ENCODE measurements at regions of chr14 and their contacts with region 1.

Region 1: DNA sequence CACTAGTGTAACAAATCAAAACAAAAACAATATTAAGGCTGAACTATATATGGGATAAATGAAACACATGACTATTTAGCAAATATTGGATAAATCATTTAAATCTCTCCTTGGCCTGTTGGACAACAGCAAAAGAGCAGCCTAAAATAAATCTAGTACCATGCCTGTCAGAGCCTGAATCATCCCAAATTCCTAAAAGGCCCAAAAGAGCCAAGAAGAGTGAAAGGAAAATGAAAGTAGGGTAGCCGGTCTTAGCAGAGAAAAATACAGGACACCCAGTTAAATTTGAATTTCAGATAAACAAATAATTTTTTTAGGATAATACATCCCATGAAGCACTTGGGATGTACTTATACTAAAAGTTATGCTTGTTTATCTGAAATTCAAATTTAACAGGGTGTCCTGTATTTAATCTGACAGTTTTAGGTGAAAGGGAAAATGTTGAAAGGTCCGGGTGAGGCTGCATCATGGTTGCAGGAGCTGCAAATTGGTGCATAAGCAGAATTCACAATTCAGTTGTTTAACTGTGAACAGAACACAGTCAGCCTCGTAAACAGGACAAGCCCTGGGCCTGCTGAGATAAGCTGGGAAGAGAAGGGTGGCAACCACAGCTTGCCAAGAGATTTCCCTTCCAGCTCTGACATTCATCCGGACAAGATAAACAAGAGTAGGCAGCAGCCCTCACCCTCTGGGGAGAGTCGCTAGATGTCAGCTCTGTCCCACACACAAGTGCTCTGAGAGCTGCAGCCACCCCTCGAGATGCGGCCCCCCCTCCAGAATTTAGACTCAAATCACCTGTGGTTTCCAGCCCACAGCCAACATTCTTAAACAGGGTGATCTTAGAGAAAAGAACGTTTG is 30.3 kb downstream of the DMAC2L start:
- DNase-seq: peak; percentile 76
- ATAC-seq: no peak
- H3K4me3 Mint-ChIP-seq: no peak overlapping the region
- H3K27ac Mint-ChIP-seq: no peak overlapping the region
- H3K4me1 Mint-ChIP-seq: peaks cover 30% of the 10 kb centered on the region
- H3K27me3 Mint-ChIP-seq: peaks cover 3% of the 10 kb centered on the region

Region 2: DNA sequence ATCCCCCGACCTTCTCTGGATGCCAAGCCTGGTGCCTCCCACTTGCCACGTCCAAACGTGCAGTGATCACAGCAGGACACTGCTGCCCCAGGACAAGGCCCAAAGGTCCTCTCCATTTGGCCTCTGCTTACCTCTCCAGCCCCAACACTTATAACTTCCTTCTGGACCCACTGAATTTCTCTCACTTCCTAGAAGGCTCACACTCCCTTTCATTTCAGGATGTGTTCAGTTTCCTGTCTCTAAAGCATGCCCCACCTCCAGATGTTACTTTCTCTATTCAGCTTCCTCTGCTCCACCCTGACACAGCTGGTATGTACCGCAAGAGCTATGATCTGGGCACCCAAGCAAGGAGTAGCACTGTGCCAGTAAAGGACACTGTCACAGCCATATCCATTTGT is 21.3 kb after region 1 on chr14:
- CTCF ChIA-PET with region 1: interaction called, 11 read pairs
- POLR2A ChIA-PET with region 1: interaction called, 6 read pairs
- intact Hi-C with region 1: loop called (anchors 1 kb)
- DNase-seq: peak; percentile 66
- ATAC-seq: peak; percentile 96
- H3K4me3 Mint-ChIP-seq: peak overlapping the region; percentile 82
- H3K27ac Mint-ChIP-seq: peak overlapping the region; percentile 94
- H3K4me1 Mint-ChIP-seq: peaks cover 20% of the 10 kb centered on the region
- H3K27me3 Mint-ChIP-seq: no peaks in the 10 kb centered on the region

Region 3: GRCh38 chr14:50396631-50397390 is 54.4 kb after region 1 on chr14 and contains the start of gene CDKL1:
- CTCF ChIA-PET with region 1: no interaction called
- POLR2A ChIA-PET with region 1: interaction called, 5 read pairs
- intact Hi-C with region 1: loop called (anchors 2 kb)
- DNase-seq: peak; percentile 70
- ATAC-seq: peak; percentile 75
- H3K4me3 Mint-ChIP-seq: peak within 1 kb of the TSS; percentile 82
- H3K27ac Mint-ChIP-seq: peak within 1 kb of the TSS; percentile 72
- H3K4me1 Mint-ChIP-seq: peaks cover 14% of the 10 kb centered on the region
- H3K27me3 Mint-ChIP-seq: peaks cover 6% of the 10 kb centered on the region
- total RNA-seq, gene CDKL1: 2.9 to 4.4 TPM

Region 4: GRCh38 chr14:50452979-50453705 is 110.7 kb after region 1 on chr14:
- CTCF ChIA-PET with region 1: no interaction called
- POLR2A ChIA-PET with region 1: interaction called, 5 read pairs
- intact Hi-C with region 1: loop called in 1 of 2 experiments (anchors 5 kb)
- DNase-seq: no peak
- ATAC-seq: peak; percentile 92
- H3K4me3 Mint-ChIP-seq: no peak overlapping the region
- H3K27ac Mint-ChIP-seq: peak overlapping the region; percentile 22
- H3K4me1 Mint-ChIP-seq: peaks cover 16% of the 10 kb centered on the region
- H3K27me3 Mint-ChIP-seq: no peaks in the 10 kb centered on the region